Dorsolateral prefrontal cortex (tissue), 120 donors: ENCODE measurements at regions of chr20 and their contacts with region 1.

Region 1: GRCh38 chr20:32357869-32358631 is at the start of gene ASXL1:
- DNase-seq: peak; percentile 95 to 98 (median 97)
- H3K4me3 ChIP-seq: peak within 1 kb of the TSS; percentile 61 to 100 (median 90)
- H3K27ac ChIP-seq: peak within 1 kb of the TSS; percentile 87 to 99 (median 98)
- H3K27me3 ChIP-seq: no peaks in the 10 kb centered on the region
- CTCF ChIP-seq: peak in 29 of 56 donors; percentile 9 to 51 (median 30)
- total RNA-seq, gene ASXL1: 50.9 to 97.5 (median 69.8) TPM

Region 2: GRCh38 chr20:32207626-32208498 is 150.2 kb before region 1 on chr20 and contains the starts of genes PLAGL2 and POFUT1:
- intact Hi-C with region 1: loop called (anchors 1 to 2 kb)
- DNase-seq: peak; percentile 80 to 94 (median 88)
- H3K4me3 ChIP-seq: peak within 1 kb of the TSS; percentile 72 to 100 (median 96)
- H3K27ac ChIP-seq: peak within 1 kb of the TSS; percentile 35 to 97 (median 90)
- H3K27me3 ChIP-seq: no peaks in the 10 kb centered on the region
- CTCF ChIP-seq: peak in 50 of 56 donors; percentile 11 to 66 (median 48)
- total RNA-seq, gene PLAGL2: 6.0 to 16.0 (median 10.0) TPM
- total RNA-seq, gene POFUT1: 10.1 to 21.0 (median 14.4) TPM

Region 3: DNA sequence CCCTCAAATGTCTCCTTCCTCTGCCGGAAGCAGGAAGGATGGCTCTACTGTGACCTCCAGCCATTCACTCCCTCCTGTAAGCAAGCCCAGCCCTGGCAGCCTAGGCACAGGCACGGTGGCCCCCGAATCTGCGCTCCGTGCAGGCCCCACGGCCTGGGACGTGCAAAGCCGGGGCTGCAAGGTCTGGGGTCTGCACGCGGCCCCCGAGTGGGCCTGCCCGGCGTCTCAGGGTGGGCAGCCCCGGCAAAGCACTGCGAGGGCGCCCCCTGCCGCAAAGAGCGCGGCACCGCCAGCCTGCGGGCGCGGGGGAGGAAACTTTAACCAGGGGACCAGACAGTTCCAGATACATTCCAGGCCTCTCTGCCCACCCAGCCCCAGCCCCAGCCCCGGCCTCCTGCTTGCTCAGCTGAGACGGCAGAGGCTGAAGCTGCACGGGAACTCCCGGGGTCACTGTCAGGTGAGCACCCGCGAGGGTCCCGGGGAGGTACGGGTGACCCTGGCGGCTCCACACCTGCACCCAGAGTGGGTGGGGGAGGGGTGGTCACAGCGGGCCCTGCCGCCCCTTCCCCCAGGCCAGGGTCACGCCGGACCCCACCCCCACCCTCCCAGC is 98.9 kb after region 1 on chr20:
- intact Hi-C with region 1: loop called (anchors 5 kb)
- DNase-seq: peak in 5 of 10 donors; percentile 50 to 79 (median 56)
- H3K4me3 ChIP-seq: peak overlapping the region; percentile 32 to 74 (median 58)
- H3K27ac ChIP-seq: peak overlapping the region in 58 of 59 donors; percentile 62 to 99 (median 86)
- H3K27me3 ChIP-seq: no peaks in the 10 kb centered on the region
- CTCF ChIP-seq: peak; percentile 48 to 92 (median 80)

Region 4: DNA sequence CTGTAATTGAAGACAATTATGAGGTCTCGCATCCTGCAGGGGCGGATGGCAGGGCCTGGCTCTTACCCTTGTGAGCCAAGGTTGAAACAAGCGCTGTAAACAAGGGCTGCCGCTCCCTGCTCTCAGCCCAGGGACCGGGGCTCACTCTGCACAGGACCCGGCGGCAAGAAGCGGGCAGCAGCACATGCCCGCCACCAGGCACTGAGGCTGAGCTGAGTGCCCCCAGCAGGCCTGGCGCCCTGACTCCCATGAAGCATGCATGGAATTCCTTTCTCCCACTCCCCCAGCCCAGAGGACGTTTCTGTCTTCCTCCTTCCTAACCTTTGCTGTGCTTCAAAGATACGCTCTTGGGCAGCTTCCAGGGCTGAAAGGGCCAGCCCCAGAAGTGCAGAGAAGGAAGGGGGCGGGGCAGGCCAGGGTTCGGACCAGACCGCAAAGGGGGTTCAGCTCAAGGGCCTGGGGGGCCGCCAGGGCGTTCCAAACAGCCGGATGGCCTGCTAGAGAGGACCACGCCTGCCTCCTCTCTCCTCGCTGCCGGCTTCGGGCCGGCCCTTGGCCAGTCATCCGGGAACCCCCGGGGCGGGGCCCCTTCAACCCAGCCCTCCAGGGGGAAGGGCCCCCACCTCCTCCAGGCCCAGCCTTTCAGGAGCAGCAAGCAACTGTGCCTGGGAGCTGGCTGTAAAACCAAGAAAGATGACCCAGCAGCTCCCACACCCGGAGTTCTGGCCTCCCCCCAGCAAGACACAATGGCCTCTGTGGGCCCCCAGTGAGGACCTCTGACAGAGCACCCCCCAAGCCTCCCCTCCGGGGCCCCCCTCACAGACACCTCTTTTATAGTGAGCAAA is 117.1 kb after region 1 on chr20:
- intact Hi-C with region 1: loop called (anchors 2 to 5 kb)
- DNase-seq: peak in 5 of 10 donors; percentile 63 to 78 (median 67)
- H3K4me3 ChIP-seq: peak overlapping the region in 55 of 59 donors; percentile 4 to 55 (median 33)
- H3K27ac ChIP-seq: peak overlapping the region; percentile 57 to 99 (median 91)
- H3K27me3 ChIP-seq: no peaks in the 10 kb centered on the region
- CTCF ChIP-seq: peak in 4 of 56 donors; percentile 5 to 9 (median 8)

Region 5: GRCh38 chr20:33686100-33686983 is 1328.3 kb after region 1 on chr20 and contains the start of gene E2F1:
- intact Hi-C with region 1: loop called in 1 of 2 experiments (anchors 10 kb)
- DNase-seq: peak; percentile 91 to 97 (median 95)
- H3K4me3 ChIP-seq: peak within 1 kb of the TSS; percentile 26 to 68 (median 53)
- H3K27ac ChIP-seq: peak within 1 kb of the TSS; percentile 78 to 99 (median 94)
- H3K27me3 ChIP-seq: no peaks in the 10 kb centered on the region
- CTCF ChIP-seq: peak; percentile 8 to 81 (median 62)
- total RNA-seq, gene E2F1: 5.2 to 12.7 (median 8.2) TPM